Mammary epithelial cell (primary cell): ENCODE measurements at regions of chr15 and their contacts with region 1.

Region 1: GRCh38 chr15:92521624-92522008 is 127.9 kb downstream of the ST8SIA2 start:
- DNase-seq: peak; percentile 62
- H3K4me3 ChIP-seq: no peak overlapping the region
- H3K27ac ChIP-seq: no peak overlapping the region
- H3K4me1 ChIP-seq: no peaks in the 10 kb centered on the region
- H3K27me3 ChIP-seq: no peaks in the 10 kb centered on the region
- CTCF ChIP-seq: peak; percentile 70 to 80

Region 2: DNA sequence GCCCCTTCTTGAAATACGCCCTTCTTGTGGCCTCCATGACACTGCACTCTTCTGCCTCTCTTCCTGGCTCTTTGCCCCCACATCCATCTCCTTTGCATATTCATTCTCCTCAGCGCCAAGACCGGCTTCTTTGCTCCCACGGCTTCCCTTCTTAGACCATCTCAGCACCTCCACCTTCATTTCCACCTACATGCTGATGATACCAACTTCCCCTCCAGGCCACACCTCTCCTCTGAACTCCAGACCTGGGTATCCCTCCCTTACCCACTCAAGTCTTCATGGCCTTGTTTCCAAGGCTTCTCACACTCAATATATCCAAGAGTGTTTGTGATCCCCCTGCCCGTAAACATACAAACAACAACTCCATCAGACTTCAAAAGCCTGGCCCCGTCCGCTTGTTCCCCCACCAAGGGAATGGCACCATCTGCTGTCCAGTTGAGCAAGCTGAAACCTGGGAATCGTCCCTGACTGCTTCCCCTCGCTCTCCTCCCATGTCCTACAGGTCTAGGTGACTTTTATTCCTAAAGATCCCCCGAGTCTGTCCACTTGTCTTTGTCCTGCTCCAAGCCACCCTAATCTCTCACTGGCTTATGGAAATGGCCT is 161.7 kb after region 1 on chr15:
- CTCF ChIA-PET with region 1: no interaction called
- dilution Hi-C with region 1: no loop called
- in situ Hi-C with region 1: no loop called
- intact Hi-C with region 1: loop called (anchors 1 kb)
- DNase-seq: no peak
- H3K4me3 ChIP-seq: no peak overlapping the region
- H3K27ac ChIP-seq: no peak overlapping the region
- H3K4me1 ChIP-seq: no peaks in the 10 kb centered on the region
- H3K27me3 ChIP-seq: no peaks in the 10 kb centered on the region
- CTCF ChIP-seq: peak in 1 of 2 donors; percentile 43